GM12878 (cell line): ENCODE measurements at regions of chr4 and their contacts with region 1.

Region 1: DNA sequence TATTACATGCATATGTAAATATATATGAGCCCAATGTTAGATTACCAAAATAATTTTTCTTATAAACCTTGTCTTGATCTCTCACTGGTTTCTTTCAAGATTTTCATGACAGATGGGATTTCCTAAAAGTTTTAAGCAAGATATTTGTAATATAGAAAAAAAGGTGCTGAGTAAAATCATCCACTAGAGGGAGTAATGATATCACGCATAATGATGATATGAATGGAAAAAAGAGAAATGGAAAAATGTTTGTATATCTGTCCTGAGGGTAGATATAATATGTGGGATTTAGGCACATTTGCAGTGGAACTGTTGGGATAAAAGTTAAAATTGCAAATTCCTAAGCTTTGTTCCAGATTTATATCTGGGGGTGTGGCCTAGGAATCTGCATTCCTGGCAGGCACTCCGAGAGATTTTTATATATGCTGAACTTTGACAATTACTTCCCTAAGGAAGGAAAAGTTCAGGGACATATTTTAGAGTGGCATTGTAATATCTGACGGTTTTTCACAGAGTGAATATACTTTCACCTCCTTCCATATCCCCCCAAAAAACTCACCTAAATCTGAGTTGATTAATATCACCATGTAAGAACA is 60.5 kb downstream of the TMA16 start:
- DNase-seq: no peak
- ATAC-seq: no peak
- H3K4me3 ChIP-seq: no peak overlapping the region
- H3K27ac ChIP-seq: no peak overlapping the region
- H3K4me1 ChIP-seq: peaks cover 18% of the 10 kb centered on the region
- H3K27me3 ChIP-seq: no peaks in the 10 kb centered on the region
- CTCF ChIP-seq: peak; percentile 41 to 63 (median 58); a peak in 4 of 6 replicates
- EP300 ChIP-seq: no peak
- POLR2A ChIP-seq: no peak
- RAD21 ChIP-seq: peak; percentile 72

Region 2: DNA sequence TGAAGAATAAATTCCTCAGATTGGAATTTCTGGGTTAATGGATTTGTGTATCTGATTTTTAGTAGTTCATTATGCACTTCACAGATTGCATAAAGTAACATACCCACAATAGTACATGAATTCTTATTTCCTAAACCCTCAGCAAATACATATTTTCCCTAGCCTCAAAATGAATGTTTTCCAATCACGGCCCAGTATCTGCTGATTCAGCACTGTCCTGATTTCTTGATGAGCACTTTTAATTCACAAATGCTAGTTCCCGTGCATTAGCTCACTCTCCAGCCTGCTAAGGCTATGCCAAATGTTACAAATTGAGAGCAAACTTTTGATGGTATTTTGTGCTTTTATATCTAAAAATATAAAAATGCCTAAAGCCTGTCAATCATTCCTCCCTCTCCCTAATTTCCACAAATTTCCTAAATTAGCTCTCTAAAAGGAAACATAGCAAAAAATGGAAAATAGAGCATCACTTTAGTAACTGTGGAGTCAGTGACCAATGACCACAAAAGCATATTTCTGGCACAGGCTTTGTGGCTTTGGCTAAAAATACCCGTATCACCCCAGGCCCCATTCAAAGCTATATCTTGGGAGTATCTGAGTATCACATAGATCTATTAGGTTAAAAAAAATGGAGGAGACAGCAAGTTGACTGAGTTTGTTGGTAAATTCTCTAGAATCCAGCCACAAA is 463.8 kb before region 1 on chr4:
- CTCF ChIA-PET with region 1: no interaction called
- POLR2A ChIA-PET with region 1: no interaction called
- RAD21 ChIA-PET with region 1: no interaction called
- SMC1A ChIA-PET with region 1: no interaction called
- in situ Hi-C with region 1: no loop called
- intact Hi-C with region 1: no loop called
- DNase-seq: no peak
- ATAC-seq: no peak
- H3K4me3 ChIP-seq: no peak overlapping the region
- H3K27ac ChIP-seq: no peak overlapping the region
- H3K4me1 ChIP-seq: no peaks in the 10 kb centered on the region
- H3K27me3 ChIP-seq: no peaks in the 10 kb centered on the region
- CTCF ChIP-seq: no peak
- EP300 ChIP-seq: no peak
- POLR2A ChIP-seq: no peak
- RAD21 ChIP-seq: no peak

Region 3: GRCh38 chr4:163467082-163467770 is 87.7 kb before region 1 on chr4:
- CTCF ChIA-PET with region 1: no interaction called
- POLR2A ChIA-PET with region 1: no interaction called
- RAD21 ChIA-PET with region 1: no interaction called
- SMC1A ChIA-PET with region 1: no interaction called
- in situ Hi-C with region 1: no loop called
- intact Hi-C with region 1: no loop called
- DNase-seq: no peak
- ATAC-seq: no peak
- H3K4me3 ChIP-seq: no peak overlapping the region
- H3K27ac ChIP-seq: no peak overlapping the region
- H3K4me1 ChIP-seq: no peaks in the 10 kb centered on the region
- H3K27me3 ChIP-seq: no peaks in the 10 kb centered on the region
- CTCF ChIP-seq: no peak
- EP300 ChIP-seq: no peak
- POLR2A ChIP-seq: no peak
- RAD21 ChIP-seq: no peak

Region 4: DNA sequence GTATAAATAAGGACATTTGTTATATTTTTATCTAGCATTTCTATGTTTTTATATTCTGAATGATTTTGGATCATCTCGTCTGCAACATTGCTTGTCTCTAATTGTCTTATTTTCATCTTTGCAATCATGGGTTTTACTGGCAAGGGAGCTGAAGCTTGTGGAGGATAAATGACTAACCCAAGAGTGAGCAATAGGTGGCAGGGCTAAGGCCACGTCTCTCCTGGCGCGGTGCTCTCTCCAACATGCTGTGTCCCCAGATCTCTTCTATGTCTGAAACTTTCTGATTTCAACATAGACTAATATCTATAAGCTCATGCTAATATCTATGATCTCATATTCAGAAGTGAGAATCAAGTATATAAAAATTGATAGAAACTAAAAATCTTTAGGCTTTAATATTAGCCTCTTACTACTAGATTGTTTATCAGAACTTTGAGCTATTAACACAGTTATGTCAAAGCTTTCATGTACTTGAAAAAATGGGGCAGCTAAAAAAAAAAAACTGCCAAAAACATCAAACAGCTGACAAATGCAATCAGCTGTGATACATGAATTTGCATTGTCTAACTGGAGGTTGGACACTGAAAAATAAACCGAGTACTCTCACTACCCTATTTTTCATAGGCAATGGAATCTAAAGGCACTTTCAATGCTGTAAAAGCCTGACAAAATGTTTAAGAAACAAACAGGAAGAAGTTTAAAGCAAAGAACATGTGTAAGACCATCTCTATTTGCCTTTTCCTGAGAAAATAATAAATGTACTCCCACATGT is 108.7 kb after region 1 on chr4:
- CTCF ChIA-PET with region 1: interaction called, 571 read pairs
- POLR2A ChIA-PET with region 1: interaction called, 3 read pairs
- RAD21 ChIA-PET with region 1: interaction called, 133 read pairs
- SMC1A ChIA-PET with region 1: interaction called, 727 read pairs
- in situ Hi-C with region 1: loop called (anchors 5 kb)
- intact Hi-C with region 1: loop called (anchors 2 kb)
- DNase-seq: peak; percentile 78
- ATAC-seq: peak; percentile 87
- H3K4me3 ChIP-seq: no peak overlapping the region
- H3K27ac ChIP-seq: peak overlapping the region; percentile 70
- H3K4me1 ChIP-seq: peaks cover 39% of the 10 kb centered on the region
- H3K27me3 ChIP-seq: no peaks in the 10 kb centered on the region
- CTCF ChIP-seq: no peak
- EP300 ChIP-seq: peak; percentile 77 to 80
- POLR2A ChIP-seq: no peak
- RAD21 ChIP-seq: no peak

Region 5: DNA sequence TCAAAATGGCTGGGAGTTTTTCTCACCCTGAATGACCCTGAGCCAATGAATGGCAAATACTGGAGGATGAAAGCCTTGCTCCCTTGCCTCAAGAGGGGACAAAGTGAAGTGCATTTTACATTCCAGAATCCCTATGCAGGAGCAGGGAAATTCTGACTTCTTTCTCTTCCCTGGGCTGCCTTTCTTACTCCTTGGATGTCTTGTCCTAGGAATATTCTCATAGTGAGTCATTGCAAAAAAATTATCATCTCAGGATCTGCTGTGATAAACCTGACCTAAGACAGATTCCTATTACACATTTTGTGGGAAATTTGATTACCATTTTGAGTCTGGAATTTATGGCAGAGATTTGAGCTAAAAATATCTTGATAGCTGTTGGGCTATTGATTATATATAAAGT is 139.4 kb after region 1 on chr4:
- CTCF ChIA-PET with region 1: interaction called, 42 read pairs
- POLR2A ChIA-PET with region 1: no interaction called
- RAD21 ChIA-PET with region 1: interaction called, 4 read pairs
- SMC1A ChIA-PET with region 1: interaction called, 11 read pairs
- in situ Hi-C with region 1: no loop called
- intact Hi-C with region 1: no loop called
- DNase-seq: no peak
- ATAC-seq: no peak
- H3K4me3 ChIP-seq: no peak overlapping the region
- H3K27ac ChIP-seq: no peak overlapping the region
- H3K4me1 ChIP-seq: no peaks in the 10 kb centered on the region
- H3K27me3 ChIP-seq: no peaks in the 10 kb centered on the region
- CTCF ChIP-seq: no peak
- EP300 ChIP-seq: no peak
- POLR2A ChIP-seq: no peak
- RAD21 ChIP-seq: no peak

Region 6: GRCh38 chr4:163755013-163755412 is 200.0 kb after region 1 on chr4:
- CTCF ChIA-PET with region 1: interaction called, 393 read pairs
- POLR2A ChIA-PET with region 1: interaction called, 5 read pairs
- RAD21 ChIA-PET with region 1: interaction called, 170 read pairs
- SMC1A ChIA-PET with region 1: interaction called, 261 read pairs
- in situ Hi-C with region 1: loop called (anchors 5 kb)
- intact Hi-C with region 1: loop called (anchors 1 kb)
- DNase-seq: peak; percentile 12
- ATAC-seq: peak; percentile 92
- H3K4me3 ChIP-seq: no peak overlapping the region
- H3K27ac ChIP-seq: no peak overlapping the region
- H3K4me1 ChIP-seq: no peaks in the 10 kb centered on the region; the same call in 1 of the 2 replicates
- H3K27me3 ChIP-seq: no peaks in the 10 kb centered on the region
- CTCF ChIP-seq: peak in 2 of 3 experiments; percentile 47 to 65
- EP300 ChIP-seq: no peak
- POLR2A ChIP-seq: no peak
- RAD21 ChIP-seq: peak; percentile 64

Region 7: DNA sequence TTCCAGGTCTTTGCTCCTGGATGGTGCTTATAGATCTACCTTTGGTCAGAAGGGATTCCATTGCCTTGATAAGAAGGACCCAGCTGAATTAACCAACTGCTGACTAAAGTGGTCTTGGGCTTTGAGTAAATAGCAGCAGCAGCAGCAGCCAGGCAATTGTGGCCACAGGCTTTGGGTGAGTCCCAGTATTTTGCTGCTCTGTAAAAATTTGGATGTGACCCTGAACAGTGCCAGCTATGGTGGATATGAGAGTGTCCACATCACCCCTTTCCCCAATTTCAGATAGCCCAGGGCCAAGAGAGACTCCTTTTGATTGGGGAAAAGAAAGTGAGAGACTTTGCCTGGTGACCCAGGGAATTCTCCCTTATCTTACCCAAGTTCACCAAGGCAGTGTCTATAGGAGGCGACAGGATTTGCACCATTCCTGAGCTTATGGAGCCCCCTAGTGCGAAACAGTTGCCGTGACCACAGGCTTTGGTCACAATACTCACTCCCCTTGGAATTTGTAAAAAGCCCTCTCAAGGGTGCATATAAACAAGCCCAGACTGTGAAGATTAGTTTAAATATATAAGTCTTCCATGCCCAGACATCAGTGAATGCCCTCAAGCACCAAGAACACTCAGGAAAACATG is 457.5 kb after region 1 on chr4:
- CTCF ChIA-PET with region 1: interaction called, 5 read pairs
- POLR2A ChIA-PET with region 1: no interaction called
- RAD21 ChIA-PET with region 1: interaction called, 4 read pairs
- SMC1A ChIA-PET with region 1: interaction called, 6 read pairs
- in situ Hi-C with region 1: no loop called
- intact Hi-C with region 1: loop called (anchors 1 kb)
- DNase-seq: no peak
- ATAC-seq: peak; percentile 78
- H3K4me3 ChIP-seq: no peak overlapping the region
- H3K27ac ChIP-seq: no peak overlapping the region
- H3K4me1 ChIP-seq: no peaks in the 10 kb centered on the region
- H3K27me3 ChIP-seq: no peaks in the 10 kb centered on the region
- CTCF ChIP-seq: peak; percentile 30 to 54 (median 40); a peak in 4 of 6 replicates
- EP300 ChIP-seq: no peak
- POLR2A ChIP-seq: no peak
- RAD21 ChIP-seq: peak; percentile 66

Region 8: DNA sequence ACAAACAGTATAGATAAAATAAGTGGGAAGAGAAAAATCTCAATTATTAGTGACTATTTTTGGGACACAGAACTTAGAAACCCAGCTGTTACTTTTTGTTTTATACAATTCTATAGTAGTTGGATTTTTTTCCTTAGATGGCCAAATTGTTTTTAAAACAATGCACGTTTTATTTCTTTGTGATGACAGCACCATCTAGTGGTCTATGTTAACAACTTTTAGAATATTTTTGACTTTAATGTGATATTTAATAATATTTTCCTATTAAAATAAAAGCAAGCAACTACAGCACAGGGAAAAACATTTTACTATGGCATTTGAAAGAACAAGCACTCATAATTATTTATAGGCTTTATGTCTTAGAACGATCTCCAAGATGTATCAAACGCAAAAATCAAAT is 1193.4 kb after region 1 on chr4:
- CTCF ChIA-PET with region 1: interaction called, 7 read pairs
- POLR2A ChIA-PET with region 1: no interaction called
- RAD21 ChIA-PET with region 1: no interaction called
- SMC1A ChIA-PET with region 1: interaction called, 3 read pairs
- in situ Hi-C with region 1: no loop called
- intact Hi-C with region 1: loop called (anchors 1 kb)
- DNase-seq: no peak
- ATAC-seq: no peak
- H3K4me3 ChIP-seq: no peak overlapping the region
- H3K27ac ChIP-seq: no peak overlapping the region
- H3K4me1 ChIP-seq: no peaks in the 10 kb centered on the region
- H3K27me3 ChIP-seq: no peaks in the 10 kb centered on the region
- CTCF ChIP-seq: peak in 1 of 3 experiments; percentile 36; a peak in 2 of 6 replicates
- EP300 ChIP-seq: no peak
- POLR2A ChIP-seq: no peak
- RAD21 ChIP-seq: peak; percentile 23; the same call in 1 of the 2 replicates